ENCODE measurements at regions of chr17 and their contacts with region 1.

Region 1: DNA sequence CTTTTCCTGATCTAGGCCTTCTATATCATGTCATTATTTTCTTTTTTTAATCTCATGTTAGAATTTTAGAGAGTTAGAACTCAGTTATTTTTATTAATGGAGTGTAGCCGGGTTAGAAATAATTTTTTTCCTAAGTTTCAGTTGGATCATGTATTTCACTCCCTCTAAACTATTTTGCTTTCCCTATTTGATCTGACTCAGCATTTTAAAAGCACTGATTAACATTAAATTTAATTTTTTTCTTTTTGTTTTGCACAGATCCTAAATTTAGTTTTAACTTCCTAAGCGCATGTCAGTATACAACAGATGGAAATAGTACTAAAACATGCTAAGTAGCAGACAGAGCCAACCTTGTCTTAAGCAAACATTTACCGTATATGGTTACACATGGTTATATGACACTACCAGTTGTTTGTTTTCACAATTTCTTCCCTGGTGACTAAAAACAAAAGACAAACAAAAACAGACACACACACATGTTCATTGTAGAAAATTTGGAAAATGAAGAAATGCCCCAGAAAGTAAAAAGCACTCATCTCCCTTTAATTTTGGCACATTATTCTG is 33.6 kb upstream of the RAB11FIP4 start:
- DNase-seq: no peak
- H3K4me3 ChIP-seq: no peak overlapping the region
- H3K4me3 Mint-ChIP-seq: no peak overlapping the region
- H3K27ac Mint-ChIP-seq: no peak overlapping the region
- H3K4me1 ChIP-seq: no peaks in the 10 kb centered on the region
- H3K4me1 Mint-ChIP-seq: no peaks in the 10 kb centered on the region
- H3K27me3 ChIP-seq: no peaks in the 10 kb centered on the region
- H3K27me3 Mint-ChIP-seq: no peaks in the 10 kb centered on the region
- CTCF ChIP-seq: no peak

Region 2: GRCh38 chr17:30824356-30825145 is 533.4 kb before region 1 on chr17 and contains the start of gene CRLF3:
- CTCF ChIA-PET with region 1: no interaction called
- POLR2A ChIA-PET with region 1: no interaction called
- intact Hi-C with region 1: loop called (anchors 5 kb)
- DNase-seq: peak; percentile 91 to 96
- H3K4me3 ChIP-seq: peak within 1 kb of the TSS; percentile 65
- H3K4me3 Mint-ChIP-seq: peak within 1 kb of the TSS; percentile 97
- H3K27ac Mint-ChIP-seq: peak within 1 kb of the TSS; percentile 53
- H3K4me1 ChIP-seq: peaks cover 8% of the 10 kb centered on the region; the same call in 1 of the 2 replicates
- H3K4me1 Mint-ChIP-seq: peaks cover 26% of the 10 kb centered on the region
- H3K27me3 ChIP-seq: no peaks in the 10 kb centered on the region
- H3K27me3 Mint-ChIP-seq: no peaks in the 10 kb centered on the region
- CTCF ChIP-seq: peak; percentile 41 to 44
- total RNA-seq, gene CRLF3: 16.3 and 17.6 TPM in 2 replicates